Aorta (tissue), 5 donors: ENCODE measurements at regions of chr2 and their contacts with region 1.

Region 1: DNA sequence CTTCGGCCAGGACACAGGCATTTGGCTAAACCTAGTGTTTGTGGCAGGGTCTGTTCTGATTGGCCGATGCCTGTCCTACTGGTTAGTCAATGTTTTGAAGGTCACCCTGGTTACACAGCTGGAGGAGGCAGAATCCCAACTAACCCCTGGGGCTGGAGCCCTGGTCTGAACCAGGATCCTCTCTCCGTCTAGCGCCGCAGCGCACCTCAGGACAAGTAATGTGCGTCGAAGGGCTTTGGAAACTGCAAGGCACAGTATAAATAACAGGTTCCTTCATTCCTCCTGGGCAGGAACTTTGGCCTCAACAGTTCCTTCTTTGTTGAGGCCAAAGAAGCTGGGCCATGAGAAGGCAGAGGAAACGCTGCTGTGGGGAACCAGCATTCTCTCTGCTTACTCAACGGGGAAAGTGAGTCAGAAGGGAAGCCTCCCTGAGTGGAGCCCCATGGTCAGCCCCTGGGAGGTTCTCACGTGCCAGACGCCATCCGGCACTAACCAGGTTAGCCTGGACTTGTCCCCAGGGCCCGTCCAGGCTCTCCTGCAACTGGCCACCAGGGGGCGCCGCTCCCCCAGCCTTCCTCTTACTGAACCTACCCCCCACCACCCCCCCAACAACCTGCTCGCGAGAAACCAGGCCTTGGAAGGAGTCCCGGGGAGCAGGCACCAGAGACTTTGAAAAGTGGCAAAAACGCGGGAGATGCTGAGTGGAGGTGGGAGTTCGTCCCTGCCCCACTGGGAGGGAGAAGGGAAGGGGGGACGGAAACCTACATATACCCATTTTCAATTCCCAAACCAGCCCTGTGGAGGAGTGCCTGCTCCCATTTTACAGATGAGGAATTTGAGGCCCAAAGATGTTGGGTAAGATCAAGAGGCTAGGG is 19.8 kb downstream of the TEX44 start:
- DNase-seq: peak; percentile 96 to 99
- ATAC-seq: peak; percentile 86
- H3K4me3 ChIP-seq: no peak overlapping the region
- H3K27ac ChIP-seq: peak overlapping the region; percentile 97 to 98
- H3K4me1 ChIP-seq: no peaks in the 10 kb centered on the region
- H3K27me3 ChIP-seq: no peaks in the 10 kb centered on the region

Region 2: GRCh38 chr2:231503766-231504165 is 108.7 kb before region 1 on chr2:
- intact Hi-C with region 1: no loop called
- DNase-seq: peak in 1 of 2 donors; percentile 27
- ATAC-seq: no peak
- H3K4me3 ChIP-seq: no peak overlapping the region
- H3K27ac ChIP-seq: no peak overlapping the region
- H3K4me1 ChIP-seq: no peaks in the 10 kb centered on the region
- H3K27me3 ChIP-seq: no peaks in the 10 kb centered on the region

Region 3: DNA sequence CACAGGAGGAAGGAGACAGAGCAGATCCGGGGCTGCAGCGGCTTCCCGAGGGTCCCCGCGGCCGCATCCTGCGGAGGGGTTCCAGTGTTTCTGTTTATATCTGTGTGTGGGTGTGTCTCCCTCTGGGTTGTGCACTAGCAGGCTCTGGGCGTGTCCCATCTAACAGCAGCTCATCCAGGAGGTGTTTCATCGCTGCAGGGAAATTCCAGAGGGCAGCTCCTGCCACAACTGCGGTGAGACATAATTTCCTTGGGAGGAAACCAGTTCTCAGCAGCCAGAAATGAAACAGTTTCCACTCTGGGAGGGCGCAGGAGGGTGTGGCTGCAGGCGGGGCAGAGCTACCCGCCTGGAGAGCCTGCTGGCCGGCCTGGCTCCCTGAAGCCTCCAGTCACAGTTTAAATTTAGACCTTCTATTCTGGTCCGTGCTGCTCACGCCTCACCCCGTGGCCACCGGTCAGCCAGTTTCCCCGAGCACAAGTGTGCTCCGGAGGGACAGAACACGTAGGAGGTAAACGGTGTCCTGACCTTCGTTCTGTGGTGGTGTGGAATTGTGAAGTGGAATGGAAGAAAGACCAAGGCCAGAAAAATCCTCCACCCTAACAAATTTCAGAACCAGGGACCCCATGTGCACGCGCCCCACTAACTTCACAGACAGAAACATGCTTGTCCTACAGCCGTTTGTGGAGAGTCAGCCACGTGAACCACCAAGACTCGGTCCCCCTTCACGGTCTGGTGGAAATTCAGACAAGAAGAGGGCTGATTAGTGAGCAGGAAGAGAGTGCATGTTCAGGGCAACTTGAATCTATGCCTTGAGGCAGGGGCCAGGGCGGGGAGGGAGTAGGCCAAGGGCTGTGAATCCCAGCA is 30.4 kb after region 1 on chr2:
- intact Hi-C with region 1: loop called (anchors 1 to 2 kb)
- DNase-seq: peak; percentile 94 to 96
- ATAC-seq: peak; percentile 94
- H3K4me3 ChIP-seq: no peak overlapping the region
- H3K27ac ChIP-seq: peak overlapping the region; percentile 97 to 99
- H3K4me1 ChIP-seq: peaks cover 0 to 3% of the 10 kb centered on the region in 2 donors
- H3K27me3 ChIP-seq: no peaks in the 10 kb centered on the region

Region 4: DNA sequence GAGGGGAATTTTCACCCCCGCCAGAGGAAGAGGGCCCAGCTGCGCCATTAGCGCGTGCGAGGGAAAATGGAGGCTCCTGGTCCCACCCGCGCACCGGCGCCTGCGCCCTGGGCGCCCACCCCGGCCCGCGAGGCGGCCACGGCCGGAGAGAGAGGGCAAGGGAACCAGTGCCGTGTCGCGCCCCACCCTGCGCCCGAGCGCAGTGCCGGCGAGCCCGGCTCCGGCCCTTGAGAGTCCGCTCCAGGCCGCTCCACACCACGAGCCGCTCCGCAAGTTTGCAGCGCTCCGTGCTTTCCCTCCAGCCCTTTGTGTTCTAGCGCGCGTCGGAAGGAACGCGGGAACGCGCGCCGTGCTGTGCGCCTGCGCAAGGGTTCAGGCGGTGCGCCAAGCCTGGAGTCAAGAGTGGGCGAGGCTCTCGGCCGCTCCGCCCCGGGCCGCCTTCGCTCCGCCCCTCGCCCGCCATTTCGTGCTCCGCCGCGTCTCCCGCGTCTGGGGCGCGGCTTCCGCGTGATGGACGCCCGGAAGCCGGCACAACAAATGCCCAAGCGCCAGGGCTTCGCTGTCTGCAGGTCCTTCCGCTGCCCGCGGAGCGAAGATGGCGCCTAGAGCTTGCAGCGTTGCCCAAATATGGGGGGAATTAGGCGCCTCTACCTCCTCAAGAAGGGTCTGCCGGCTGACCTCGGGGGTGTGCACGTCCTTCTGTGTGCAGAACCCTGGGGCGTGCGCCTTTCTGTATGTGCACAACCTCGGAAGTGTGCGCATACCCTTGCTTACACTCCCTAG is 49.8 kb after region 1 on chr2:
- intact Hi-C with region 1: loop called in 1 of 2 experiments (anchors 2 kb)
- DNase-seq: peak; percentile 97 to 99
- ATAC-seq: peak; percentile 93
- H3K4me3 ChIP-seq: peak overlapping the region in 1 of 2 donors; percentile 13
- H3K27ac ChIP-seq: peak overlapping the region; percentile 16 to 93
- H3K4me1 ChIP-seq: no peaks in the 10 kb centered on the region
- H3K27me3 ChIP-seq: no peaks in the 10 kb centered on the region

Region 5: GRCh38 chr2:231674587-231675338 is 62.3 kb after region 1 on chr2:
- intact Hi-C with region 1: loop called (anchors 1 to 2 kb)
- DNase-seq: peak; percentile 83 to 91
- ATAC-seq: peak; percentile 65
- H3K4me3 ChIP-seq: no peak overlapping the region
- H3K27ac ChIP-seq: peak overlapping the region; percentile 30 to 87
- H3K4me1 ChIP-seq: peaks cover 0 to 2% of the 10 kb centered on the region in 2 donors
- H3K27me3 ChIP-seq: no peaks in the 10 kb centered on the region

Region 6: DNA sequence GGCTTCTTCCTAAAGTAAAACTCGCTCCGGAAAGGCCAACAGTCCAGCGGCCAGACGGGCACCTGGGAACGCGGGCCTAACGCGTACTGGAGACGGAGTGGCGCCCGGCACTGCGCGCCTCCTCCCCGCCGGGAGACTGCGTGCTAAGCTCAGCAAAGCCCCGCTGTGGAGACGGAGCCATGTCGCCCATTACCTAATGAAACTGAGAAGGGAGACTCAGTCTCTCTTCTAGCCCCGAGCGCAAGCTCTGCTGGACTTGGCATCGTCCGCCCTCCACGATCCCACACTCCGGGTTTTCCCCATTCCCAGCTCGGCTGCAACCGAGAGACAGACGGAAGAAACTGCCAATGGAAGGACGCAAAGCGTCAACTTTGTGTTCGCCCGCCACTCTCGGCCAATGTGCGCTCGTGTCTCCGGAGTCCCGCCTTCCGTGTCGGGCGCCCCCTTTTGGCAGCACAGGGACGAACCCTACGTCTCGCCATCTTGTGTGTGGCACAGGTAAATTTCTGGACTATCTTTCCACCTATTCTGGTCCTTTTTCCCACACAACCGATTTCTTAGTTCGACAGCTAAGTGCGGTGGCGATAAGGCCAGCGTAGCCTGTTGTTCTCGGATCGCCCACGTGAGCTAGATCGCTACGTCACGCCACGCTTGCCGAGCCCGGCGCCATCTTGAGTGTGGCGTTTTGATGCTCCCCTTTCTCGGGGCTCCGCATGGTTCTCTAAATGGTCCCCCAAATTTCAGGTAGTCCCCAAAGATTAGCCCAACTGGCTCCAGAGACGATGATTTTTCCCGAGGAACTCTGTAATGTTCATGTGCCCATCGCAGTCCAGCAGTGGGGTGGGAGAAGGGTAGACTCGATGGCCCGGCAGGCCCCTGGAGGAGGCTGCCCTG is 94.6 kb after region 1 on chr2:
- intact Hi-C with region 1: loop called (anchors 1 to 2 kb)
- DNase-seq: peak; percentile 98 to 99
- ATAC-seq: peak; percentile 83
- H3K4me3 ChIP-seq: peak overlapping the region; percentile 8 to 45
- H3K27ac ChIP-seq: peak overlapping the region; percentile 88 to 95
- H3K4me1 ChIP-seq: no peaks in the 10 kb centered on the region
- H3K27me3 ChIP-seq: no peaks in the 10 kb centered on the region

Region 7: GRCh38 chr2:231780909-231781797 is 168.7 kb after region 1 on chr2 and contains the start of gene PDE6D:
- intact Hi-C with region 1: loop called (anchors 5 to 10 kb)
- DNase-seq: peak; percentile 99
- ATAC-seq: peak; percentile 98
- H3K4me3 ChIP-seq: peak within 1 kb of the TSS; percentile 86 to 93
- H3K27ac ChIP-seq: peak within 1 kb of the TSS in 1 of 2 donors; percentile 81
- H3K4me1 ChIP-seq: peaks cover 2 to 5% of the 10 kb centered on the region in 2 donors
- H3K27me3 ChIP-seq: no peaks in the 10 kb centered on the region
- total RNA-seq, gene PDE6D: 23.4 to 26.2 TPM